Breast epithelium (tissue), 4 donors: ENCODE measurements at regions of chr12 and their contacts with region 1.

Region 1: GRCh38 chr12:11689591-11690186 is 40.2 kb downstream of the ETV6 start:
- DNase-seq: no peak
- H3K4me3 ChIP-seq: no peak overlapping the region
- H3K27ac ChIP-seq: peak overlapping the region; percentile 7 to 81
- H3K4me1 ChIP-seq: peaks cover 0 to 17% of the 10 kb centered on the region in 2 donors
- H3K27me3 ChIP-seq: no peaks in the 10 kb centered on the region
- CTCF ChIP-seq: no peak
- POLR2A ChIP-seq: no peak

Region 2: DNA sequence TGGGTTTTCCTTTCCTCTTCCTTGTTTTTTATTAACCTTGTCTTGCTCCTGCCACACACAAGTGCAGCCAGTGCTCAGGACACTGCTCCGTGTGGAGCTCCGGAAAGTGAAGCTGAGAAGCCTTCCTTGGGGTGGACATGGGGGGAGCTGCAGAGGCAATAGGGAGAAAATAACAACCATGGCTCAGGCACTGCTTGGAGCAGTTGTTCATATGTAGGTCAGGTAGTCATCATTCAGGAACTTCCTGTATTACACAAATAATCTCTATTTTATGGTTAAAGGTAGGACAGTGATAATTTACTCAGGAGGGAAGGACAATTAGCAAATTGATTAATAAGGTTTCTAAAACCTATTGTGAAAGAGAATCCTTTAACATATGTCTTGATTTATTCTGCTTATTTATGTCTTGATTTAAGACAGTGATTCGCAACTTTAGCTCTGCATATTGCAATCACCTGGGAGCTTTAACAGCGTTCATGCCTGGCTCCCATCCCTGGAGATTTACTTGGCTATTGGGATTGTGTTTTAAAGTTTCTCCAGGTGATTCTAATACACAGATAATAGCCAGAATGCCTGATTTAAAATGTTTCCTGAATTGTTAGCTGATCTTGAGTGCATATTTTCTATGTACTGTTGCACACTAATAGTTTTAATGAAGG is 51.9 kb after region 1 on chr12:
- intact Hi-C with region 1: loop called (anchors 2 kb)
- DNase-seq: no peak
- H3K4me3 ChIP-seq: no peak overlapping the region
- H3K27ac ChIP-seq: peak overlapping the region; percentile 27 to 59
- H3K4me1 ChIP-seq: peaks cover 0 to 13% of the 10 kb centered on the region in 2 donors
- H3K27me3 ChIP-seq: no peaks in the 10 kb centered on the region
- CTCF ChIP-seq: no peak
- POLR2A ChIP-seq: no peak

Region 3: GRCh38 chr12:12266873-12267741 is 577.4 kb after region 1 on chr12 and contains the start of gene LRP6:
- intact Hi-C with region 1: loop called (anchors 5 kb)
- DNase-seq: peak; percentile 78 to 88
- H3K4me3 ChIP-seq: peak within 1 kb of the TSS; percentile 77 to 86 (median 85)
- H3K27ac ChIP-seq: peak within 1 kb of the TSS; percentile 99 to 100
- H3K4me1 ChIP-seq: peaks cover 0 to 3% of the 10 kb centered on the region in 2 donors
- H3K27me3 ChIP-seq: no peaks in the 10 kb centered on the region
- CTCF ChIP-seq: peak in 1 of 3 donors; percentile 20
- POLR2A ChIP-seq: peak; percentile 67
- total RNA-seq, gene LRP6: 28.6 to 69.1 (median 52.4) TPM